Right ventricle myocardium inferior (tissue), 1 donor: ENCODE measurements at regions of chr2 and their contacts with region 1.

Region 1: DNA sequence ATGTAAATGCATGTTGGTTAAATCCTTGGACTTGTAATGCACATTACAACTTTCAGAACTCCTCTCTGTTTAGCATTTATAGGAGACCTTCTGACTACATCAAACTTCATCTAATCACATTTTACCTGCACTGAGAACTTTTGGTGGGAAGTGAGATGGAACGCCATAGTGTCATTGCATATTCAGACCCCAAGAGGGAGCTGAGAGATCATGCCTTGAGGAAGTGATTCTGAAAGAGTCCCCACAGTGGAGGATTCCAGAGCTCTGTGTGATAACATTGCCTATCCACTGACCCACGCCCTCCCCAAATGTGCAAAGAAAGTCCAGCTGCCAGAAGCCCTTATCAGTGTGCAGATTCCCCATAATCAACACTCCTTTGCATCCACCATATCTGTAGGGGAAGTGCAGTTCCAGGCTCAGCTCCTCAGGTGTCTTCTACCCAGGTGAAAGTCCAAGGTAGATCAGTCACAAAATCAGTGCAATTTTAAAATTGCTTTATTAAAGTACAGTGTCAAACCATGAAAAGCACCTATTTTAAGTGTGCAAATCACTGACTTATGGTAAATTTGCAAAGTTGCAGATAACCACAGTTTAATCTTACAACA is 212.4 kb downstream of the RPIA start:
- DNase-seq: no peak
- ATAC-seq: peak; percentile 69

Region 2: DNA sequence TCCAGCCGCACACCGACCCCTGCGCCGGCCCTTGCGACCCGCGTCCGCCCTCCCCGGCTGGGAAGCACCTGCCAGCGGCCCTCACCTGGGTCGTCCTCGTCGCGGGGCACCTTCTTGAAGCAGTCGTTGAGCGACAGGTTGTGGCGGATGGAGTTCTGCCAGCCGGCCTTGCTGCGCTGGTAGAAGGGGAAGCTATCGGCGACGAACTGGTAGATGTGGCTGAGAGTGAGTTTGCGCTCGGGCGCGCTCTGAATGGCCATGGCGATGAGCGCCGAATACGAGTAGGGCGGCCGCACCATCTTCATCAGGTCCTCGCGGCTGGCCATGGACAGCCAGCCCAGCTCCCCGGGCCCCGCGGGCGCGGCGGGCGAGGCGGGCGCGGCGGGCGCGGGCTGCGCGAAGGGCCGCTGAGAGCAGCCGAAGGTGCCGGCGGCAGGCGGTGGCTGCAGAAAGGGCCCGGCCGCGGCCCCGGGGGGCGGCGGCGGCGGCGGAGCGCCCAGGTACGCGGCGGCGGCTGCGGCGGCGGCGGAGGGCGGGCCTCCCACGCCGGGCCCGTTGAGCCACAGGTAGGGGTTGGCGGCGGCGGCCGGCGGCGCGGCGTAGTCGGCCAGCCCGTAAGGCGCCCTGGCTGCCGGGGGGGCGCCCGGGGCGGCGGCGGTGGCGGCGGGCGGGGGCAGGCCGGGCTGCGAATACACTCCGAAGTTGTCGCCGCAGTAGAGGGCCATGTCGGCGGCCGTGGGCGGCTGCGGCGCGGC is 451.9 kb before region 1 on chr2:
- intact Hi-C with region 1: no loop called
- DNase-seq: no peak
- ATAC-seq: no peak

Region 3: GRCh38 chr2:88739985-88740600 is 163.8 kb before region 1 on chr2:
- intact Hi-C with region 1: no loop called
- DNase-seq: no peak
- ATAC-seq: peak; percentile 79

Region 4: GRCh38 chr2:88950010-88950409 is 46.2 kb after region 1 on chr2:
- intact Hi-C with region 1: loop called (anchors 10 kb)
- DNase-seq: no peak
- ATAC-seq: no peak